Left ventricle myocardium superior (tissue), 1 donor: ENCODE measurements at regions of chrX and their contacts with region 1.

Region 1: GRCh38 chrX:31213941-31214340 is 142.1 kb upstream of the FTHL17 start:
- DNase-seq: peak; percentile 23
- ATAC-seq: peak; percentile 22

Region 2: DNA sequence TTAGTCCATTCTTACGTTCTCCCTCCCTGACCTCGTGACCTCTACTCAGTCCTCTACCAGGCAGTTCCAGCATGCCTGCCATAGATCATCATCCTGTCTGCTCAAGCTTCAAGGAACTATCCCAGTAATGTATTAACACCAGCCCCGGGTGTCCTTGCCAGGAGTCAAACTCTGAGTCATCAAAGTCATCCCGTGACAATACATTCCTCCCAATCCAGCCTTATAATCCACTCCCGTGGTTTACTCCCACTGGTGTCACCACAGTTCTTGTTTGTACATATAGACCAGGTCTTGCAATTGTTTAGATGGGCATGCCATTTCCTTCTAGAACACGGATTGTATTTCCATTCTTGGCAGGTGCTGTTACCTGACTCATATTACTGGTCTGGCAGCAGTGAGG is 256.2 kb before region 1 on chrX:
- intact Hi-C with region 1: loop called (anchors 5 kb)
- DNase-seq: no peak
- ATAC-seq: peak; percentile 29

Region 3: GRCh38 chrX:31136144-31136611 is 77.8 kb before region 1 on chrX:
- intact Hi-C with region 1: no loop called
- DNase-seq: no peak
- ATAC-seq: no peak

Region 4: DNA sequence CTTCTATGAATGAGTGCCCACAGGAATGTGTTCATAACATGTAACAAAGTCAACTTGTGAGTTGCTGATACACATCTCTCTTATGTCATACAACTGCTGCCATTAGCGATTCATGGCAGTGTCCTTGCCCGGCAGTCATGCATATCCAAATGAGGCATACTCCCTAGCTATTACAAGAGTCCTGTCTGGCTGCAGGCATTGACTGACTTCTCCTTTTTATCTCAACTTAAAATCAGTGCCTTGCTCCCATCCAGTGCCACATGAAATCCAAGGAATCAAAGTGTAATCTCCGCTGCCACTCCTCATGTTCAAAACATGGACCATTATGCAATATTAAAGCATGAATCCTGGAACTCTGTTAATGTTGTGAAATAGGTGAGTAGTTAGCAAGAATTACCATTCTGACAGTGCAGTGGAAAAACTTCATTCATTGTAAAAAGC is 206.8 kb after region 1 on chrX:
- intact Hi-C with region 1: no loop called
- DNase-seq: no peak
- ATAC-seq: no peak

Region 5: GRCh38 chrX:31661280-31661679 is 447.3 kb after region 1 on chrX:
- intact Hi-C with region 1: loop called (anchors 10 kb)
- DNase-seq: no peak
- ATAC-seq: no peak